MCF 10A (cell line): ENCODE measurements at regions of chr15 and their contacts with region 1.

Region 1: GRCh38 chr15:81410318-81410753 is 36.3 kb upstream of the TMC3 start:
- DNase-seq: peak; percentile 82
- H3K4me3 Mint-ChIP-seq: no peak overlapping the region
- H3K27ac Mint-ChIP-seq: peak overlapping the region; percentile 31
- H3K4me1 Mint-ChIP-seq: peaks cover 13% of the 10 kb centered on the region
- H3K27me3 Mint-ChIP-seq: peaks cover 12% of the 10 kb centered on the region
- CTCF ChIP-seq: peak; percentile 48

Region 2: DNA sequence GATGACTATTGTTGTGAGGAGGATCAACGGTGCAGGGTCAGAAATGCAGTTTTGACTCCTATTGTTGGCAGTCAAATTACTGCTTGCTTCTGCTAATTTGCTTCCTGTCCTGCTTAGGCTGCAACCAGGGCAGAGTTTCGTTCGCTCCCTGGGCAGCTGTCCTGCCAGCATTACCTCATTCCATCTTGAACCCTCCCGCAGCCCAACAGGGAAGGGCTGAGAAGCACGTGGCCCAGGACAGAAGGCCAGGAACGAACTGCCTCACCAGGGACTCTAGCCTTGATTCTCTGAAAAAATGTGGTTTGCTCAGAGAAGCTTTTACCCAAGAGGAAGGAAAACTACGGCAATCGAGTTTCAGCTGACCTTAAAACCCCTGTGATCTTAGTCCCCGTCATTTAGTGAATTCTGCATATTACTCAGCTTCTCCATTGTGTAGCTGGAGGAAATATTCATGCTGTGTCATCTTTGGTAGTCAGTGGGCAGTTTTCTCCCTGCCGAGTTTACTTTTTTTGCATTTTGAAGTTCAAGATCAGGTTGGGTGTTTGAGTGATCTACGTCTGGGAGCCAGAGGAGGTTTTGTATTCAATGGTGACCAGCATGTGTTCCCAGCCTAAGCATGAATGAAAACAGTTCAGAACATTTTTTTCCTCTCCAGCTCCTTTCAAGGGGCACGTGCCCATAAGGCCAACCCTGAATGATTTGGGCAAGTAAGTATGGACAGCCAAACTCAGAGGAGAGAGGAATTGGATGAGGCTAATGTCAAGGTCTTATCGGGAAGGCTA is 386.7 kb before region 1 on chr15:
- CTCF ChIA-PET with region 1: no interaction called
- POLR2A ChIA-PET with region 1: no interaction called
- intact Hi-C with region 1: no loop called
- DNase-seq: no peak
- H3K4me3 Mint-ChIP-seq: no peak overlapping the region
- H3K27ac Mint-ChIP-seq: no peak overlapping the region
- H3K4me1 Mint-ChIP-seq: no peaks in the 10 kb centered on the region
- H3K27me3 Mint-ChIP-seq: no peaks in the 10 kb centered on the region
- CTCF ChIP-seq: no peak

Region 3: GRCh38 chr15:81274931-81275707 is 135.2 kb before region 1 on chr15:
- CTCF ChIA-PET with region 1: interaction called, 44 read pairs
- POLR2A ChIA-PET with region 1: interaction called, 3 read pairs
- intact Hi-C with region 1: no loop called
- DNase-seq: peak; percentile 87
- H3K4me3 Mint-ChIP-seq: no peak overlapping the region
- H3K27ac Mint-ChIP-seq: no peak overlapping the region
- H3K4me1 Mint-ChIP-seq: peaks cover 15% of the 10 kb centered on the region
- H3K27me3 Mint-ChIP-seq: no peaks in the 10 kb centered on the region
- CTCF ChIP-seq: peak; percentile 83

Region 4: GRCh38 chr15:81434851-81435250 is 24.5 kb after region 1 on chr15:
- CTCF ChIA-PET with region 1: interaction called, 10 read pairs
- POLR2A ChIA-PET with region 1: interaction called, 3 read pairs
- intact Hi-C with region 1: no loop called
- DNase-seq: no peak
- H3K4me3 Mint-ChIP-seq: no peak overlapping the region
- H3K27ac Mint-ChIP-seq: no peak overlapping the region
- H3K4me1 Mint-ChIP-seq: peaks cover 12% of the 10 kb centered on the region
- H3K27me3 Mint-ChIP-seq: no peaks in the 10 kb centered on the region
- CTCF ChIP-seq: no peak

Region 5: DNA sequence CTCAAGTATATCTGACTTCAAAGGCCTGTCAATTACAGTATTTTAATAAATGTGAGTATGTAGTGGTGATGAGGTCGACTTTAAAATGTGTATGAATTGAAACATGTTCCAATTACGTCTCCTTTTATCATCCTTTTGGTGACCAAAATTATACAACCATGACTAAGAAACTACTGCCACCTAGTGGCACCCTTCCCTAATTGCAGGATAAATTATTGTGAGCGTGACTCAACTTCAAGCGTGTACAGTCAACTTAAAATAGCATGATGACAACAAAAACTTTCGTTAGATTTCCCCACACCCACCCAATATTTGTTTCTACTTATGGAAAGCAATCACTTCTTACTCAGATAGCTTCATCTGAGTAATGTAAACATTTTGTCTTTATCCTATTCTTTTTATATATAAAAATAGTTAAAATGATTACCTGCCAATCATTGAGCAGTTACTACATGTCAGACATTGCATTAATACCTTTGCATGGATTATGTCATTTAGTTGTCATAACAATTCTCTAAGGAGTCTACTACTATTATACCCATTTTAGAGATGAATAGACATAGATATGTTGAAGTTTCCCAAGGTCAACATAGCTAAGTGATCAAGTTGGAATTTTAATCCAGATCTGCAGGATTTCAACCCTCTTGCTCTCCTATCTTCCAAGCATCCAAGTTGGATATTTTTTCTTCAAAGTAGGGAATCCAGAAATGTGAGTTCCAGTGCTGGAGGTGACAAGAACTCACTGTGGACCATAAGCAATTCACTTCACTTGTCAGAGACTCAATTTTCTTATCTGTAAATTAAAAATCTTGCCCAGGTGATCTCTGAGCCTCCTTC is 529.5 kb after region 1 on chr15:
- CTCF ChIA-PET with region 1: interaction called, 23 read pairs
- POLR2A ChIA-PET with region 1: no interaction called
- intact Hi-C with region 1: loop called (anchors 2 kb)
- DNase-seq: peak; percentile 69
- H3K4me3 Mint-ChIP-seq: no peak overlapping the region
- H3K27ac Mint-ChIP-seq: no peak overlapping the region
- H3K4me1 Mint-ChIP-seq: peaks cover 10% of the 10 kb centered on the region
- H3K27me3 Mint-ChIP-seq: no peaks in the 10 kb centered on the region
- CTCF ChIP-seq: peak; percentile 79

Region 6: GRCh38 chr15:82103468-82103867 is 693.1 kb after region 1 on chr15:
- CTCF ChIA-PET with region 1: interaction called, 8 read pairs
- POLR2A ChIA-PET with region 1: no interaction called
- intact Hi-C with region 1: loop called (anchors 1 kb)
- DNase-seq: no peak
- H3K4me3 Mint-ChIP-seq: no peak overlapping the region
- H3K27ac Mint-ChIP-seq: no peak overlapping the region
- H3K4me1 Mint-ChIP-seq: peaks cover 7% of the 10 kb centered on the region
- H3K27me3 Mint-ChIP-seq: no peaks in the 10 kb centered on the region
- CTCF ChIP-seq: peak; percentile 35

Region 7: DNA sequence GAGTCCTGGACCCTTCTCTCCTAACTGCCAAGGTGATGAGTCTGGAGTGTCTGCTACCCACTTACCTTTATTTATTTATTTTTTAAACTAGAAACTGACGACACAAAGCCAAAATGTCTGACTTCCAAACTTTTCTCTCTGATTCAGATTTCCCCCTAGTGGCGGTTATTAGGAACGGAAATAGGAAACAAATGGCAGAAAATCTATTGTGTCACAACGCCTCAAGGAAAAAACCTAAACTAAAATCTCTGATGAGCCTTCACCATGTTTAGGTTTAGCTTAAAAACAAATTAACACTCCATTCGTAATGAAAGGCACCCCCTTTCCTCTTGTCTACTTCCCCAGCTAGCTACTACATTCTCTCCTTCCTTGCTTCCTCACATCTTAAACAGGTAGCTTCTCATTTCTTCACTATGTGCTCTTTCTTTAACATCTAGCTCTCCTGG is 729.5 kb after region 1 on chr15:
- CTCF ChIA-PET with region 1: interaction called, 20 read pairs
- POLR2A ChIA-PET with region 1: no interaction called
- intact Hi-C with region 1: no loop called
- DNase-seq: peak; percentile 66
- H3K4me3 Mint-ChIP-seq: no peak overlapping the region
- H3K27ac Mint-ChIP-seq: peak overlapping the region; percentile 1
- H3K4me1 Mint-ChIP-seq: peaks cover 8% of the 10 kb centered on the region
- H3K27me3 Mint-ChIP-seq: no peaks in the 10 kb centered on the region
- CTCF ChIP-seq: peak; percentile 59

Region 8: DNA sequence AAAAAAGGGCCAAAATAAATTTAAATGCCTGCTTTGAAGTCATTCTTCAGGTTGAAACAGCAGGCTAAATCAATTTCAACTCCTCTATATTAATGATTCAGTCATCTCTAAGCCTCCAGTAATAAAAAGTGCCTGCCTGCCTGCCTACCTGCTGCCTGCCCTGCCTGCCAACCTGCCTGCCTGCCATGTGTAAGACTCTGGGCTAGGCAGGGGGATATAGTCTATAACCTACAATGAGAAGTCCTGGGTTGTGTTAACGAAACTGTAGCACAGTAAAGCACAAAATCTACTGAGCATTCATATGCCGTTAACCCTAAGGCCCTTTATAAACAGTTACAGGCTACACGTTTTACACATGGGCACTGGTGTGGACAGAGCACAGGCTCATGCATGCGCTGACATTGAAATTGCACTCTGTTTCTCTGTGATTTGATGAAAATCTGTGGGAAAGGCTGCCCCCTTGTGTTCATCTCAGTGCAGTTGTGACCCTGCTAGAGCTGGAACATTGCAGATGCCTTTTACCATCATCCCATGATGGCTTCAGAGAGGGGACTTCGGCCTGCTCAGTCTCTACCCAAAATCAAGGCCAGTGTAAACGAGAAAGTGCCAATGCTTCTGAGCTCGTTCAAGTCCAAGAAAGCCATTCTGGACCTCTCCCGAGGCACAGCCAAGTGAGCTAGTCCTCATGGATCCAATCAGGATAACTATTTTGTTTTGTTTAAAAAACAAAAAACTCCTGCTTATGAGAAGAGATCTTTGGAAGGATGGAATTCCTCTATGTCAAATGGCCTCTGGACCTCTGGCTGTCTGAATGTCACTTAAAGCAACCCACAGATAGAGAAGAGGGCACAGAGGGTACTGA is 787.6 kb after region 1 on chr15:
- CTCF ChIA-PET with region 1: interaction called, 13 read pairs
- POLR2A ChIA-PET with region 1: no interaction called
- intact Hi-C with region 1: loop called (anchors 1 kb)
- DNase-seq: peak; percentile 82
- H3K4me3 Mint-ChIP-seq: no peak overlapping the region
- H3K27ac Mint-ChIP-seq: no peak overlapping the region
- H3K4me1 Mint-ChIP-seq: peaks cover 6% of the 10 kb centered on the region
- H3K27me3 Mint-ChIP-seq: no peaks in the 10 kb centered on the region
- CTCF ChIP-seq: peak; percentile 83